CD8-positive, alpha-beta T cell (primary cell): ENCODE measurements at regions of chr17 and their contacts with region 1.

Region 1: GRCh38 chr17:60720763-60721531 is 43.3 kb downstream of the BCAS3 start:
- DNase-seq: peak in 5 of 9 experiments; percentile 18 to 73 (median 33)
- ATAC-seq: peak; percentile 44
- H3K4me3 ChIP-seq: no peak overlapping the region
- H3K4me3 Mint-ChIP-seq: no peak overlapping the region
- H3K27ac ChIP-seq: no peak overlapping the region
- H3K27ac Mint-ChIP-seq: no peak overlapping the region
- H3K4me1 ChIP-seq: no peaks in the 10 kb centered on the region
- H3K4me1 Mint-ChIP-seq: peaks cover 5% of the 10 kb centered on the region
- H3K27me3 ChIP-seq: no peaks in the 10 kb centered on the region
- H3K27me3 Mint-ChIP-seq: no peaks in the 10 kb centered on the region
- CTCF ChIP-seq: peak; percentile 92

Region 2: GRCh38 chr17:60989379-60989778 is 268.4 kb after region 1 on chr17:
- CTCF ChIA-PET with region 1: interaction called, 4 read pairs
- POLR2A ChIA-PET with region 1: no interaction called
- intact Hi-C with region 1: loop called in 1 of 2 experiments (anchors 5 kb)
- DNase-seq: no peak
- ATAC-seq: no peak
- H3K4me3 ChIP-seq: no peak overlapping the region
- H3K4me3 Mint-ChIP-seq: no peak overlapping the region
- H3K27ac ChIP-seq: no peak overlapping the region
- H3K27ac Mint-ChIP-seq: no peak overlapping the region
- H3K4me1 ChIP-seq: no peaks in the 10 kb centered on the region
- H3K4me1 Mint-ChIP-seq: no peaks in the 10 kb centered on the region
- H3K27me3 ChIP-seq: no peaks in the 10 kb centered on the region
- H3K27me3 Mint-ChIP-seq: no peaks in the 10 kb centered on the region
- CTCF ChIP-seq: no peak

Region 3: DNA sequence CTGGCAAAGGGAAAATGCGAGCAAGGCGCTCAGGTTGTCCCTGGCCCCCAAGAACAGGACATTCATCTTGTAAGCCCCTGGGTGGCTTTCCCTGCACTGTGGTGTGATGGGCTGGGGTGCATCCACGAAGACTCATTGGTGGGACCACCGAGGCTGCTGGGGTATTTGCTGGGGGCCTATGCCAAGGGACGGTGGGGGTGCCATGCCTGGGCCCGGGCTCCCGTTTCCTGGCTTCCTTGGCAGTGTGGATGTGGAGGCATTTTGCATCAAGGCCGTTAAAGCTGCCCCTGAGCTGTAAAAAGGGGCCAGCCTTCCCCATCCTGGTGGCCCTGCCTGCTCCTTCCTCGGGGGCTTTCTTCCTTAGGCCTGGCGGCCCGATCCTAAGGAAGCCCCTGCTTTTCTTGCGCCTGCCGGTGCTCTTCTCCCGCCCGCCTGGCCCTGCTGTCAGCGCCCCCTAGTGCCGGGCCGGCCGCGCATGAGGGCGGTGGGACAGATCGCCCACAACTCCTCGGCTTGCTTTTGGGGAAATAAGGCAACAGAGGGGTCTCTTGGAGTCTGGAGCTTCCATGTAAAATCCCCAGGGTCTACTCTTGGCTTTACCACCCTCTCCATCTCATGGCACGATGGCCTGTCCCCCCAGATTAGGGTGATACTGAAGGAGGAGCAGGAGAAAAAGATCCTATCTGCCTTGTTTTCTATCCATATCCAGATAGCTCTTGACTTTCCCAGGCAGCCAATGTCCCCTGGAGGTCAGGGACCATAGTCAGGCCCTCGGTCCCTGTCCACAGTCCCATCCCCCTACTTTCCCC is 668.9 kb after region 1 on chr17:
- CTCF ChIA-PET with region 1: interaction called, 5 read pairs
- POLR2A ChIA-PET with region 1: no interaction called
- intact Hi-C with region 1: loop called in 1 of 2 experiments (anchors 1 kb)
- DNase-seq: peak in 5 of 9 experiments; percentile 28 to 63 (median 55)
- ATAC-seq: no peak
- H3K4me3 ChIP-seq: no peak overlapping the region
- H3K4me3 Mint-ChIP-seq: no peak overlapping the region
- H3K27ac ChIP-seq: no peak overlapping the region
- H3K27ac Mint-ChIP-seq: no peak overlapping the region
- H3K4me1 ChIP-seq: no peaks in the 10 kb centered on the region
- H3K4me1 Mint-ChIP-seq: peaks cover 7% of the 10 kb centered on the region
- H3K27me3 ChIP-seq: no peaks in the 10 kb centered on the region
- H3K27me3 Mint-ChIP-seq: peaks cover 15% of the 10 kb centered on the region
- CTCF ChIP-seq: peak; percentile 70

Region 4: GRCh38 chr17:61551255-61551742 is 830.4 kb after region 1 on chr17:
- CTCF ChIA-PET with region 1: no interaction called
- POLR2A ChIA-PET with region 1: no interaction called
- intact Hi-C with region 1: loop called in 1 of 2 experiments (anchors 2 kb)
- DNase-seq: peak in 2 of 9 experiments; percentile 10 to 28
- ATAC-seq: no peak
- H3K4me3 ChIP-seq: no peak overlapping the region
- H3K4me3 Mint-ChIP-seq: no peak overlapping the region
- H3K27ac ChIP-seq: no peak overlapping the region
- H3K27ac Mint-ChIP-seq: no peak overlapping the region
- H3K4me1 ChIP-seq: no peaks in the 10 kb centered on the region
- H3K4me1 Mint-ChIP-seq: no peaks in the 10 kb centered on the region
- H3K27me3 ChIP-seq: peaks cover 0 to 8% of the 10 kb centered on the region in 2 experiments
- H3K27me3 Mint-ChIP-seq: peaks cover 47% of the 10 kb centered on the region
- CTCF ChIP-seq: peak; percentile 40

Region 5: GRCh38 chr17:61837175-61838051 is 1116.5 kb after region 1 on chr17:
- CTCF ChIA-PET with region 1: no interaction called
- POLR2A ChIA-PET with region 1: no interaction called
- intact Hi-C with region 1: loop called in 1 of 2 experiments (anchors 2 kb)
- DNase-seq: peak; percentile 11 to 69 (median 45)
- ATAC-seq: peak; percentile 48
- H3K4me3 ChIP-seq: no peak overlapping the region
- H3K4me3 Mint-ChIP-seq: no peak overlapping the region
- H3K27ac ChIP-seq: no peak overlapping the region
- H3K27ac Mint-ChIP-seq: no peak overlapping the region
- H3K4me1 ChIP-seq: no peaks in the 10 kb centered on the region
- H3K4me1 Mint-ChIP-seq: no peaks in the 10 kb centered on the region
- H3K27me3 ChIP-seq: no peaks in the 10 kb centered on the region
- H3K27me3 Mint-ChIP-seq: no peaks in the 10 kb centered on the region
- CTCF ChIP-seq: peak; percentile 77